MCF 10A (cell line): ENCODE measurements at regions of chr9 and their contacts with region 1.

Region 1: GRCh38 chr9:71819115-71819739 is 50.9 kb upstream of the CEMIP2 start:
- DNase-seq: peak; percentile 56
- H3K4me3 Mint-ChIP-seq: no peak overlapping the region
- H3K27ac Mint-ChIP-seq: no peak overlapping the region
- H3K4me1 Mint-ChIP-seq: no peaks in the 10 kb centered on the region
- H3K27me3 Mint-ChIP-seq: no peaks in the 10 kb centered on the region
- CTCF ChIP-seq: peak; percentile 62

Region 2: DNA sequence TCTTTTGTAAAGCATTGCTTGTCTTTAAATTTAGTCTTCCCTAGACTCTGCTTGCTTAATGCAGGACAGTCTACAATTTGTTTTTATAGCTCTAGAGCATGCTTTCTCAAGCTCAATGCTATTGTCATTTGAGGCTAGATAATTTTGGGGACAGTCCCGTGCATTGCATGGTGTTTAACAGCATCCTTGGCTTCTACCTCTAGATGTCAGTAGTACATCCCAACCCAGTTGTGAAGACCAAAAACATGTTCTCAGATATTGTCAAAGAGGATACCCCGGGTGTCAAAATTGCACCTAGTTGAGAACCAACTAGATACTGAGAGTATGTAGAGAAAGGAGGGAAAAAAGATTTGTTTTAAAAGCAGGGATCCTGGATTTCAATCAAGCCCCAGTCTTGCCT is 328.4 kb before region 1 on chr9:
- CTCF ChIA-PET with region 1: interaction called, 10 read pairs
- POLR2A ChIA-PET with region 1: no interaction called
- intact Hi-C with region 1: no loop called
- DNase-seq: peak; percentile 33
- H3K4me3 Mint-ChIP-seq: no peak overlapping the region
- H3K27ac Mint-ChIP-seq: no peak overlapping the region
- H3K4me1 Mint-ChIP-seq: peaks cover 3% of the 10 kb centered on the region
- H3K27me3 Mint-ChIP-seq: no peaks in the 10 kb centered on the region
- CTCF ChIP-seq: peak; percentile 50

Region 3: GRCh38 chr9:71830153-71830552 is 10.9 kb after region 1 on chr9:
- CTCF ChIA-PET with region 1: interaction called, 24 read pairs
- POLR2A ChIA-PET with region 1: no interaction called
- intact Hi-C with region 1: no loop called
- DNase-seq: no peak
- H3K4me3 Mint-ChIP-seq: no peak overlapping the region
- H3K27ac Mint-ChIP-seq: no peak overlapping the region
- H3K4me1 Mint-ChIP-seq: no peaks in the 10 kb centered on the region
- H3K27me3 Mint-ChIP-seq: no peaks in the 10 kb centered on the region
- CTCF ChIP-seq: no peak

Region 4: DNA sequence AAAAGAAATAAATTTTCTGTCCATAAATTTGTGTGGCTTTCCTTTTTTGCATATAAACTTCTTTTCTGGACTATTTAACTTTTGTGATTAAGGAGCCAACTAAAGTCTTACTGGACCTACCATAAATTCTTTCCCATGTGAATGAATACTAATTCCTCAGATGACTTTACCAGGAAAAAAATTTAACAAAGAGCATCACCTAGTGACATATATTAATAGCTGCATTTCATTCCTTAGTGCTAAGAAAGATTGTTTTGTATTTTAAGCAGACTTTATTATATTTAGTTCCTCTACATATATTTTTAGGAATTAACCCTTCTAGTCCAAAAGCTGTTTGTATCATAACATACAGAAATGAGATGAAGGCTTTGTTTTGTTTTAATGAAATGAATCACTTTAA is 156.6 kb after region 1 on chr9:
- CTCF ChIA-PET with region 1: interaction called, 14 read pairs
- POLR2A ChIA-PET with region 1: no interaction called
- intact Hi-C with region 1: no loop called
- DNase-seq: peak; percentile 2
- H3K4me3 Mint-ChIP-seq: no peak overlapping the region
- H3K27ac Mint-ChIP-seq: no peak overlapping the region
- H3K4me1 Mint-ChIP-seq: no peaks in the 10 kb centered on the region
- H3K27me3 Mint-ChIP-seq: no peaks in the 10 kb centered on the region
- CTCF ChIP-seq: no peak